Activated B cell treated with CpG ODN at 0.5 μM for 24 hours (primary cell): ENCODE measurements at regions of chrX and their contacts with region 1.

Region 1: GRCh38 chrX:48648336-48648751 is 35.3 kb upstream of the WAS start:
- DNase-seq: no peak
- ATAC-seq: peak; percentile 65
- H3K4me3 Mint-ChIP-seq: no peak overlapping the region
- H3K27ac Mint-ChIP-seq: no peak overlapping the region
- H3K4me1 Mint-ChIP-seq: peaks cover 2% of the 10 kb centered on the region
- H3K27me3 Mint-ChIP-seq: no peaks in the 10 kb centered on the region
- CTCF ChIP-seq: no peak

Region 2: GRCh38 chrX:48574270-48575266 is 73.8 kb before region 1 on chrX and contains the start of gene RBM3:
- CTCF ChIA-PET with region 1: no interaction called
- POLR2A ChIA-PET with region 1: no interaction called
- intact Hi-C with region 1: no loop called
- DNase-seq: peak; percentile 74
- ATAC-seq: peak; percentile 94
- H3K4me3 Mint-ChIP-seq: peak within 1 kb of the TSS; percentile 99
- H3K27ac Mint-ChIP-seq: peak within 1 kb of the TSS; percentile 100
- H3K4me1 Mint-ChIP-seq: peaks cover 26% of the 10 kb centered on the region
- H3K27me3 Mint-ChIP-seq: no peaks in the 10 kb centered on the region
- CTCF ChIP-seq: no peak
- total RNA-seq, gene RBM3: 381 and 394 TPM in 2 replicates

Region 3: GRCh38 chrX:48789366-48790220 is 141.2 kb after region 1 on chrX:
- CTCF ChIA-PET with region 1: no interaction called
- POLR2A ChIA-PET with region 1: no interaction called
- intact Hi-C with region 1: no loop called
- DNase-seq: no peak
- ATAC-seq: no peak
- H3K4me3 Mint-ChIP-seq: no peak overlapping the region
- H3K27ac Mint-ChIP-seq: no peak overlapping the region
- H3K4me1 Mint-ChIP-seq: no peaks in the 10 kb centered on the region
- H3K27me3 Mint-ChIP-seq: peaks cover 17% of the 10 kb centered on the region
- CTCF ChIP-seq: no peak

Region 4: DNA sequence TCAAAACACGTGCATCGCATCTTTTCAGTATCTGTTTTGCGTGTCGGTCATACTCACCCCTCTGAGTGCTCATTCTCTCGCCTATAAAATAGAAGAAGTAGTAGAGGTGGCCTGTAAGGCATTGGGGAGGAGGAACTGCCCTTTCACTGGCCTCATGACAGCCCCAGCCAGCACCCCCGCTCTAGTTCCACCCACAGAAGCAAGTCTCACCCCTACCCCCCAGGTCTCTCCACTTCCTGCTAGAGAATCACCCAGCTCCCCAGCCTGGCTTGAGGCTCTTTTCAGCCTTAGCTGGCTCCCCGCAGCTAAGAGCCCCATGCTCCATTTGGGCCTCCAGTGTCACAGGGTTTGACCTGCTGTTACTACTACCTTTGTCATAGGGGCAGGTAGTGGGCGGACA is 165.3 kb after region 1 on chrX:
- CTCF ChIA-PET with region 1: no interaction called
- POLR2A ChIA-PET with region 1: no interaction called
- intact Hi-C with region 1: no loop called
- DNase-seq: no peak
- ATAC-seq: no peak
- H3K4me3 Mint-ChIP-seq: no peak overlapping the region
- H3K27ac Mint-ChIP-seq: no peak overlapping the region
- H3K4me1 Mint-ChIP-seq: no peaks in the 10 kb centered on the region
- H3K27me3 Mint-ChIP-seq: no peaks in the 10 kb centered on the region
- CTCF ChIP-seq: no peak

Region 5: GRCh38 chrX:48937054-48937907 is 288.9 kb after region 1 on chrX:
- CTCF ChIA-PET with region 1: interaction called, 14 read pairs
- POLR2A ChIA-PET with region 1: interaction called, 3 read pairs
- intact Hi-C with region 1: loop called (anchors 1 kb)
- DNase-seq: peak; percentile 68
- ATAC-seq: peak; percentile 54
- H3K4me3 Mint-ChIP-seq: peak overlapping the region; percentile 77
- H3K27ac Mint-ChIP-seq: peak overlapping the region; percentile 98
- H3K4me1 Mint-ChIP-seq: peaks cover 87% of the 10 kb centered on the region
- H3K27me3 Mint-ChIP-seq: no peaks in the 10 kb centered on the region
- CTCF ChIP-seq: no peak

Region 6: DNA sequence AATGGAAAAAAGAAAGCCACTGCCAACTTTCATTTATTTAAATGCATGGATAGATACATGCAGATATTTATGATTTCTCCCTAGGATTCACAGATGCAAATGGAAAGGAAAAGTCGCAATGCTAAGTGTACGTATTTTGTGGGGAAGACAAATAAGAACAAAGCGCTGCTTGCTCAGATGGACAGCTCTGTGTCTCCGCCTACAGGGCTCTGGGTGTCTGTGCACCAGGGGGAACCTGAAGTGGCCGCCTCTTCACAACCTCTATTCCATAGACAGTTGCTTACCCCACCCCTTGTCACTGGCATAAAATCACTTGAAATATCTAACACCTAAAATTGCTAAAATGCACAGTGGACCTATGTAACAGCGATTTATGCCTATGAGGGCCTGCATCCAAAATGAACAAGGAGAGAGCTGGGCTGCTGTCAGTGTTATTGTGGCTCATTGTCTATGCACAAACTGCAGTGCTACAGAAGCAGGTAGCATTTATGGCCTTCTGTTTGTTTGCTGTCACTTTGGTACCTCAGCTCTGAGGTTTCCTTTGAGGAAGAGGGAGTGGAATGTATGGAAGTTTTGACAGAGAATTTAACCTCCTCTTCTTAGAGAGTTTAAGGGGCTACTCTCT is 1106.0 kb after region 1 on chrX:
- CTCF ChIA-PET with region 1: no interaction called
- POLR2A ChIA-PET with region 1: no interaction called
- intact Hi-C with region 1: loop called (anchors 5 kb)
- DNase-seq: no peak
- ATAC-seq: no peak
- H3K4me3 Mint-ChIP-seq: no peak overlapping the region
- H3K27ac Mint-ChIP-seq: no peak overlapping the region
- H3K4me1 Mint-ChIP-seq: no peaks in the 10 kb centered on the region
- H3K27me3 Mint-ChIP-seq: peaks cover 9% of the 10 kb centered on the region
- CTCF ChIP-seq: no peak